HEK293 (cell line): ENCODE measurements at regions of chr19 and their contacts with region 1.

Region 1: GRCh38 chr19:7522072-7522922 is at the start of gene MCOLN1:
- H3K4me3 ChIP-seq: peak within 1 kb of the TSS; percentile 63
- H3K27ac ChIP-seq: no peak within 1 kb of the TSS
- H3K4me1 ChIP-seq: 0 out of 2 replicates have a peak, but pooled peaks cover 2% of the 10 kb centered on the region
- CTCF ChIP-seq: no peak; the same call in 1 of the 2 replicates

Region 2: DNA sequence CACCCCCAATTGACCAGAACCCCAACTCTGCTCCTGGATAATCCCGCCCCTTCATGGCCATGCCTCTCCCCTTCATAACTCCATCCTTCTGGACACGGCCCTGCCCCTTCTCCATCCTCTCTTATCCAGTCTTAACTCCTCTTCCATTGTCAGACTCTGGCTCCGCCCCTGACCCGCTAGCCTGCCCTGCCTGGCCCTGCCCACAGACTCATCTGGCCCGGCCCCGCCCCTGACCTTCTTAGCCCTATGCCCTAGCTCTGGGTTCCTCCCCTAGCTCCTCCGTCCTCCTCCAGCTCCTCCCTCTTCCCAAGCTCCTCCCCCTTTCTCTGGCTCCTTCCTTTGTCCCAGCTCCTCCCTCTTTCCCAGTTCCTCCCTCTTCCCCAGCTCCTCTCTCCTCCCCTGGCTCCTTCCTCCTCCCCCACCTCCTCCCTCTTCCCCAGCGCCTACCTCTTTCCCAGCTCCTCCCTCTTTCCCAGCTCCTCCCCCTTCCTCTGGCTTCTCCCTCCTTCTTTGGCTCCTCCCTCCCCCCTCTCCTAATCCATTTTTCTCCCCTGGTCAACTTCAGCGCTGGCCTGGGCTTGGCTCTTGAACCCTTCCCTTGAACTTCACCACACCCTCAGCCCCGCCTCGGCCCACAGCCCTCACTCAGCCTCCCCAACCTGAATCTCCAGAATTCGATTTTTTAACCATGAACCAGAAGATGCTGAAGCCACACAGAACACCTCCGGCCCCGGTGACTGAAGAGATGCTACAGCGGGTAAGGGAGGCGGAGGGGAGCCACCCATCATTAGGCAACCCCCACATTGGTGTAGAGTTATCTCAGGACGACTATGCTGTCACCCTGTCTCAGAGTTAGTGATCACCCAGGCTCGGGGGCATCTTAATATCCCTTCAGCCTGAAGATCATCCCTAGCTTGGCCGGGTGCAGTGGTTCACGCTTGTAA is 15.6 kb before region 1 on chr19:
- CTCF ChIA-PET with region 1: interaction called, 3 read pairs
- POLR2A ChIA-PET with region 1: interaction called, 12 read pairs
- H3K4me3 ChIP-seq: peak overlapping the region; percentile 20
- H3K27ac ChIP-seq: no peak overlapping the region; the same call in 1 of the 2 replicates
- H3K4me1 ChIP-seq: peaks cover 4% of the 10 kb centered on the region; the same call in 1 of the 2 replicates
- CTCF ChIP-seq: no peak

Region 3: DNA sequence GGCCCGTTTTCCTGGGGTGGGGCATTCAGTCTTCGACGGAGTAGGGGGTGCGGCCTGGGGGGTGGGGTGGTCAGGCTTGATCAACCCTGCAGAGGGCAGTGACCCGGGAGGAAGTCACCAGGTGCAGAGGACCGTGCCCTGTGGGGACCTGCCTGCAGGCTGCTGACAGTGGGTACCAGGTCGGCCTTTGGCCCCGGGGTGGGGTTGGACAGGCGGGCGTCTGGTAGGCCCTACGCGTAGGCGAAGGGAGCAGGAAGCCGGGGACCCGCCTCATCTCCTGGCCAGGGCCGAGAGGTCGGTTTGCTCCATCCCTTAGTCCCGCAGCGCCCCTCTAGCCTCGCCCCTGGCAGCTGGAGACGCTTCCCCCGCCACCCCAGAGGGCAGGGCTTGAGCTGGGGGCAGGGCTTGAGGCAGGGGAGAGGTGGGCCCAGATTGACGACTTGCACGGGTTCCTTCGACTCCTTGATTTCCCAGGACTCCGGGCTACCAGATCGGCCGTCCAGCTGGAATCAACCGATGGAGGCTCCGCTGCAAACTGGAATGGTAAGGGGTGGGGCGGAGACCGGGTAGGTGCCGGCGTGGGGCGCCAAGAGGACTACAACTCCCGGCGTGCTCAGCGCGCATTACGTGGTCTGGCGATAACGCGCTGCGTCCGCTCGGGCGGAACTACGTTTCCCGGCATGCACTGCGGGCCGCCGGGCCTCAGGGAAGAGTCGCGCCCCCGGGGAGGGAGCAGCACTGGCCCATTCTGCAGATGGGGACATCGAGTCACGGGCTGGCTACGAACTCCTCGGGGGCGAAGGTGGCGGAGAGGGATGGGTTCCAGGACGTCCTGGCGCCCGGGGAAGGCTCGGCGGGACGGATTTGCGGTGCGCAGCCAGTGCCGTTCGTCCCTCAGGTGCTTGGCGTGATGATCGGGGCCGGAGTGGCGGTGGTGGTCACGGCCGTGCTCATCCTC is 13.0 kb after region 1 on chr19 and contains the start of gene PNPLA6:
- CTCF ChIA-PET with region 1: interaction called, 3 read pairs
- POLR2A ChIA-PET with region 1: interaction called, 27 read pairs
- H3K4me3 ChIP-seq: peak within 1 kb of the TSS; percentile 82
- H3K27ac ChIP-seq: peak within 1 kb of the TSS; percentile 39; the same call in 1 of the 2 replicates
- H3K4me1 ChIP-seq: no peaks in the 10 kb centered on the region
- CTCF ChIP-seq: peak; percentile 39; the same call in 1 of the 2 replicates

Region 4: GRCh38 chr19:7545904-7546303 is 23.6 kb after region 1 on chr19:
- CTCF ChIA-PET with region 1: no interaction called
- POLR2A ChIA-PET with region 1: no interaction called
- H3K4me3 ChIP-seq: no peak overlapping the region
- H3K27ac ChIP-seq: no peak overlapping the region
- H3K4me1 ChIP-seq: no peaks in the 10 kb centered on the region
- CTCF ChIP-seq: no peak